CD8-positive, alpha-beta T cell (primary cell): ENCODE measurements at regions of chr14 and their contacts with region 1.

Region 1: GRCh38 chr14:40487824-40488223 is 1055.6 kb upstream of the FBXO33 start:
- DNase-seq: no peak
- ATAC-seq: no peak
- H3K4me3 ChIP-seq: no peak overlapping the region
- H3K4me3 Mint-ChIP-seq: no peak overlapping the region
- H3K27ac ChIP-seq: no peak overlapping the region
- H3K27ac Mint-ChIP-seq: no peak overlapping the region
- H3K4me1 ChIP-seq: no peaks in the 10 kb centered on the region
- H3K4me1 Mint-ChIP-seq: no peaks in the 10 kb centered on the region
- H3K27me3 ChIP-seq: no peaks in the 10 kb centered on the region
- H3K27me3 Mint-ChIP-seq: no peaks in the 10 kb centered on the region
- CTCF ChIP-seq: no peak

Region 2: GRCh38 chr14:38556252-38556651 is 1931.6 kb before region 1 on chr14:
- CTCF ChIA-PET with region 1: no interaction called
- POLR2A ChIA-PET with region 1: no interaction called
- intact Hi-C with region 1: loop called in 1 of 2 experiments (anchors 5 kb)
- DNase-seq: no peak
- ATAC-seq: no peak
- H3K4me3 ChIP-seq: no peak overlapping the region
- H3K4me3 Mint-ChIP-seq: no peak overlapping the region
- H3K27ac ChIP-seq: no peak overlapping the region
- H3K27ac Mint-ChIP-seq: no peak overlapping the region
- H3K4me1 ChIP-seq: no peaks in the 10 kb centered on the region
- H3K4me1 Mint-ChIP-seq: no peaks in the 10 kb centered on the region
- H3K27me3 ChIP-seq: no peaks in the 10 kb centered on the region
- H3K27me3 Mint-ChIP-seq: peaks cover 2% of the 10 kb centered on the region
- CTCF ChIP-seq: no peak